HEK293T (cell line): ENCODE measurements at regions of chr12 and their contacts with region 1.

Region 1: DNA sequence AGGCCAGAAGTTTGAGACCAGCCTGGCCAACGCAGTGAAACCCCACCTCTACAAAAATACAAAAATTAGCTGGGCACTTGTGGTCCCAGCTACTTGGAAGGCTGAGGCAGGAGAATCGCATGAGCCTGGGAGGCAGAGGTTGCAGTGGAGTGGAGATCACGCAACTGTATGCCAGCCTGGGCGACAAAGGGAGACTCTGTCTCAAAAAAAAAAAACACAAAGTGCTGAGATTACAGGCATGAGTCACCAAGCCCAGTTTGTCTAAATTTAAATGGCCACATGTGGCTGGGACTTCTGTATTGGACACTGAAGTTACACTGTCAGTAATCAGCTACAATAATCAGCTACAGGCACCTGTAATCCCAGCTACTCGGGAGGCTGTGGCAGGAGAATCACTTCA is 100.9 kb upstream of the AEBP2 start:
- DNase-seq: no peak

Region 2: DNA sequence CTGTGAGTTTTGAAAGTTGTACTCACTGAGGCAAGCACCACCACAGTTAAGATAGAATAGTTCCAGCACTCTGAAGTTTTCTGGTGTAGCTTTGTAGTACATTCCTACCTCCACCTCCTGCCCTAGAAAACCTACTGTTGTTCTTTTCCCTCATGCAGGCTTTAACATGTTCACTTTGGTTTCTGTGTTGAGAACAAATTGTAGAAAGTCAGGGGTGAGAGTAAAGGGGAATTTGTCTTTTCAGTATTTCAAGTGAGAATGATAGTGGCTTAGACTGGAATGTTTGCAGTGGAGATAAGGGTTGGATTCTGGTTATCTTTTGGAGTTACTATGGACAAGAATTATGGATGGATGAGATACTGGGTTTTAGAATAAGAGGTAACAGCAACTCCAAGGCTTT is 168.1 kb after region 1 on chr12:
- CTCF ChIA-PET with region 1: interaction called, 11 read pairs
- POLR2A ChIA-PET with region 1: no interaction called
- DNase-seq: no peak